Gastrocnemius medialis (tissue), 4 donors: ENCODE measurements at regions of chr1 and their contacts with region 1.

Region 1: GRCh38 chr1:65059930-65060538 is 88.0 kb upstream of the AK4 start:
- DNase-seq: no peak
- ATAC-seq: no peak
- H3K4me3 ChIP-seq: no peak overlapping the region
- H3K27ac ChIP-seq: peak overlapping the region; percentile 42 to 66 (median 54)
- H3K4me1 ChIP-seq: peaks cover 94 to 95% of the 10 kb centered on the region in 2 donors
- H3K27me3 ChIP-seq: no peaks in the 10 kb centered on the region
- CTCF ChIP-seq: peak; percentile 55 to 82 (median 67)
- POLR2A ChIP-seq: no peak

Region 2: DNA sequence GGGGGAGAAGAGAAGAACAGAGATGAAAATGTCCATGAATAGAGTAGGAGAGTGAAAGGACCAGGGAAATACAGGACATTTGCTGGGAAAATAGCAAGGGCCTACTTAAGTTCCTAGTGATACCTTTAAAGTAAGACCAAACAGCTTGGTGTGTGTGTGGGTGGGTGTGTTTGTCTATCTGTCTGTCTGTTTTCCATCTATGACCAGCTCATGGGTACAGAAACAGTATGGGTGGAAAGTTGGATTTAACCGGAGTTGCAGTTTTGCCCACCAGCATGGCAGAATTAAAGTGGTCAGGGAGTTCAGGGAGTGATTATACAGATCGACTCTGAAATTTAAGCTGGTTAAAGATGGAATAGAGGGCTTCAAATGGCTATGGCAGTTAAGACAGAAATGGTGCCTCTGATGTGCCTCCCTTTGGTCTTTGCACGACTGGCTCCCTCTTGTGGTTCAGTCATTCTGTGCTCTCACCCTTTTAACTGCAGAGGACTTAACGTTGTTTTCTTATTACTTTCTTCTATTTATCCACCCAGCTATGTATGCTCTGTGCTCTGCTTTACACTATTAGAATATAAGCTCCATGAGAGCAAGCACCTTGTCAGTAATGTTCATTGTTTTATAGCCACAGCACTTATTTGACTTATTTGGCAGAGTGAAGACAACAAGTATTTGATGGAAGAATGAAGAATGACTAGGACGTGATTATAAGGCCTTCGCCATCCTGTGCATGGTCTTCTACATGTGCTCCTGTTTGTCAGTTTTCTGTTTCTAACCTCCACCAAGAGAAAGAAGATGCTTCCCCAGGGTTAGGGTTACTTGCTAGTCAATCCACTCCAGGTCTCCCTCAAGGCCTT is 15.3 kb after region 1 on chr1:
- in situ Hi-C with region 1: no loop called
- intact Hi-C with region 1: loop called (anchors 1 kb)
- DNase-seq: peak; percentile 32 to 49
- ATAC-seq: peak; percentile 89 to 95
- H3K4me3 ChIP-seq: no peak overlapping the region
- H3K27ac ChIP-seq: no peak overlapping the region
- H3K4me1 ChIP-seq: no peaks in the 10 kb centered on the region
- H3K27me3 ChIP-seq: no peaks in the 10 kb centered on the region
- CTCF ChIP-seq: peak; percentile 70 to 84 (median 76)
- POLR2A ChIP-seq: no peak

Region 3: DNA sequence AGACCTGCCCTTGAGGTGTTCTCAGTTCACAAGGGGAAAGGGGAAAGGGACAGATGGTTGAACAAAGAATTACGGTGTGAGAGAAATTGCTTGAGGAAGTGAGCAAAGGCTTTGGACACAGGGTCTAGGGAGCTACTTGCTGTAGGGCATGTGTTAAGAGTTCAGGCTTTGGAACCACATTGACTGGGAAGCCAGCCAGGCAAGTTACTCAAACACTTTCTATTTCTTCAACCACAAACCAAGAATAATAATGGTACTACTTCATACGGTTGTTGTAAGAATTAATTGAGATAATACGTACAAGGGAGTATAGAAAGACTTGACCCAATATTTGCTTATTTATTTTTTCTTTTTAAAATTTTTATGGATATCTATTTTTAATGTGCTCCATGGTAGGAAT is 114.6 kb after region 1 on chr1:
- in situ Hi-C with region 1: no loop called
- intact Hi-C with region 1: no loop called
- DNase-seq: peak; percentile 41 to 62
- ATAC-seq: peak in 1 of 2 donors; percentile 59
- H3K4me3 ChIP-seq: no peak overlapping the region
- H3K27ac ChIP-seq: no peak overlapping the region
- H3K4me1 ChIP-seq: peaks cover 11 to 20% of the 10 kb centered on the region in 2 donors
- H3K27me3 ChIP-seq: no peaks in the 10 kb centered on the region
- CTCF ChIP-seq: no peak
- POLR2A ChIP-seq: no peak

Region 4: GRCh38 chr1:65209005-65209885 is 149.2 kb after region 1 on chr1:
- in situ Hi-C with region 1: no loop called
- intact Hi-C with region 1: loop called (anchors 2 kb)
- DNase-seq: peak in 1 of 2 donors; percentile 6
- ATAC-seq: peak; percentile 14 to 52
- H3K4me3 ChIP-seq: no peak overlapping the region
- H3K27ac ChIP-seq: no peak overlapping the region
- H3K4me1 ChIP-seq: no peaks in the 10 kb centered on the region
- H3K27me3 ChIP-seq: no peaks in the 10 kb centered on the region
- CTCF ChIP-seq: peak in 3 of 5 experiments; percentile 22 to 65 (median 53)
- POLR2A ChIP-seq: no peak